Activated CD4-positive, alpha-beta T cell treated with anti-CD3 and anti-CD28 coated beads, Interleukin-2, amount 10 ng/mL, durations not matched to agents 7 days and 5 days (primary cell): ENCODE measurements at regions of chr15 and their contacts with region 1.

Region 1: DNA sequence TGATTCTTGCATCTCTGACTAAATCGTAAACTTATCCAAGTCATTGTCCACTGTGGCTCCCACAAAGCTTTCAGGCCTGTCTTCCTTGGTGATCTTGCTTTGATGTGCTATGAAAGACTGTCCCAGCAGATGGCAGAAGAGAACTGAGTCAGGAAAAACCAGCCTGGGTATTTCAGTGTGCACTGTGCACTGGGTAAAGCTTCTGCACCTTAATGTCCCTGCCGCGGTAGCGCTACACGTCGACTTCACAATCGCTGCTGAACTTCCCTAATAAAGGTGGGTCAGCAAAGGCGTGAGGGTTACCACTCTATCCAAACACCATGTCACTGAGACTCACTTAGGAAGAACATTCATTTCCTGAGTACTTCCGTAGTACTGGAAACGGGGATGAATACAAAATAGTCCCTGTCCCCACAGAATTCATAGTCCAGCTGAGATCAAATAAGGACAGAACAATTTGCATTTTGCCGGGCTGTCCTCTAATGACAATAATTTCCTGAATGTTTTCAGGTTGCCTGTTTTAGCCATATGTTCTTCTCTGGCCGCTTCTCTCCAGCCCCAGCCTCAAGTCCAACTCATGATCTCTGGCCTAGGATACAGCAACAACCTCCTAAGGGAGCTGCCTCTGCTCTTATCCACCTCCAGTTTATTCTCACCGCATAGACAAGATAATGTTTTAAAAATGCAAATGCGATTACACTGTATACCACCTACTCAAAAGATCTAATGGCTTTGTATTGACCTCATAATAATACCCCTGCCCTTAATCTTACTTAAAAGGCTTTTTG is 83.6 kb upstream of the AKAP13 start:
- DNase-seq: peak; percentile 80
- H3K4me3 Mint-ChIP-seq: no peak overlapping the region
- H3K27ac Mint-ChIP-seq: no peak overlapping the region
- H3K4me1 Mint-ChIP-seq: peaks cover 16% of the 10 kb centered on the region
- H3K27me3 Mint-ChIP-seq: peaks cover 4% of the 10 kb centered on the region

Region 2: GRCh38 chr15:85306946-85307708 is 10.3 kb after region 1 on chr15:
- CTCF ChIA-PET with region 1: interaction called, 15 read pairs
- POLR2A ChIA-PET with region 1: no interaction called
- DNase-seq: no peak
- H3K4me3 Mint-ChIP-seq: no peak overlapping the region
- H3K27ac Mint-ChIP-seq: no peak overlapping the region
- H3K4me1 Mint-ChIP-seq: peaks cover 20% of the 10 kb centered on the region
- H3K27me3 Mint-ChIP-seq: peaks cover 10% of the 10 kb centered on the region

Region 3: GRCh38 chr15:85312486-85312885 is 15.7 kb after region 1 on chr15:
- CTCF ChIA-PET with region 1: interaction called, 15 read pairs
- POLR2A ChIA-PET with region 1: no interaction called
- DNase-seq: no peak
- H3K4me3 Mint-ChIP-seq: no peak overlapping the region
- H3K27ac Mint-ChIP-seq: no peak overlapping the region
- H3K4me1 Mint-ChIP-seq: peaks cover 54% of the 10 kb centered on the region
- H3K27me3 Mint-ChIP-seq: peaks cover 10% of the 10 kb centered on the region

Region 4: GRCh38 chr15:85412956-85413854 is 116.4 kb after region 1 on chr15:
- CTCF ChIA-PET with region 1: interaction called, 22 read pairs
- POLR2A ChIA-PET with region 1: interaction called, 5 read pairs
- DNase-seq: peak; percentile 80
- H3K4me3 Mint-ChIP-seq: peak overlapping the region; percentile 2
- H3K27ac Mint-ChIP-seq: peak overlapping the region; percentile 66
- H3K4me1 Mint-ChIP-seq: peaks cover 58% of the 10 kb centered on the region
- H3K27me3 Mint-ChIP-seq: no peaks in the 10 kb centered on the region